Activated CD4-positive, alpha-beta memory T cell treated with anti-CD3 and anti-CD28 coated beads, Interleukin-2, amount 10 ng/mL, durations not matched to agents 7 days and 5 days (primary cell): ENCODE measurements at regions of chr3 and their contacts with region 1.

Region 1: GRCh38 chr3:59052803-59053411 is 3.1 kb upstream of the CFAP20DC start:
- DNase-seq: no peak
- H3K4me3 Mint-ChIP-seq: no peak overlapping the region
- H3K27ac Mint-ChIP-seq: no peak overlapping the region
- H3K4me1 Mint-ChIP-seq: peaks cover 14% of the 10 kb centered on the region
- H3K27me3 Mint-ChIP-seq: peaks cover 7% of the 10 kb centered on the region

Region 2: GRCh38 chr3:58994746-58995330 is 58.1 kb before region 1 on chr3:
- CTCF ChIA-PET with region 1: interaction called, 25 read pairs
- POLR2A ChIA-PET with region 1: interaction called, 3 read pairs
- DNase-seq: peak; percentile 25
- H3K4me3 Mint-ChIP-seq: no peak overlapping the region
- H3K27ac Mint-ChIP-seq: no peak overlapping the region
- H3K4me1 Mint-ChIP-seq: peaks cover 9% of the 10 kb centered on the region
- H3K27me3 Mint-ChIP-seq: peaks cover 4% of the 10 kb centered on the region

Region 3: DNA sequence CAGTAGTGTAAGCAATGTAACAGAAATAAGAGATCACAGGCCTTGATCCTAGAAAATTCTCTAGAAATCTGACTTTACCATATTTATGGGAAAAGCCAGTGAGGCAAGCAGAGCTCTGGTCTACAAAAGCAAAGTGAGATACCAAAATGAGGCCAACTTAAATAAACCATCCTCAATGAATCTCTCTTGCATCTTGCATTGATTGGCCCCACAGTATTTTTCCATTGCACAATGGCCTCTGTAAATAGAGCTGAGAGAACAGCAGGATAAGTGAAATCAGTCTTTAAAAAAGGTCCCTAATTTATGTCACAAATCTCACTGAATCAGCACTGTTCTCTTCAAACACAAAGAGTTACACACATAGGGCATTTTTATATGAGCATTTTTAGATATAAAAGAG is 12.0 kb before region 1 on chr3:
- CTCF ChIA-PET with region 1: interaction called, 11 read pairs
- POLR2A ChIA-PET with region 1: no interaction called
- DNase-seq: no peak
- H3K4me3 Mint-ChIP-seq: no peak overlapping the region
- H3K27ac Mint-ChIP-seq: no peak overlapping the region
- H3K4me1 Mint-ChIP-seq: no peaks in the 10 kb centered on the region
- H3K27me3 Mint-ChIP-seq: peaks cover 3% of the 10 kb centered on the region

Region 4: GRCh38 chr3:59084583-59084982 is 31.7 kb after region 1 on chr3:
- CTCF ChIA-PET with region 1: no interaction called
- POLR2A ChIA-PET with region 1: no interaction called
- DNase-seq: no peak
- H3K4me3 Mint-ChIP-seq: no peak overlapping the region
- H3K27ac Mint-ChIP-seq: no peak overlapping the region
- H3K4me1 Mint-ChIP-seq: no peaks in the 10 kb centered on the region
- H3K27me3 Mint-ChIP-seq: peaks cover 15% of the 10 kb centered on the region